Motor neuron (in vitro differentiated cells): ENCODE measurements at regions of chr6 and their contacts with region 1.

Region 1: DNA sequence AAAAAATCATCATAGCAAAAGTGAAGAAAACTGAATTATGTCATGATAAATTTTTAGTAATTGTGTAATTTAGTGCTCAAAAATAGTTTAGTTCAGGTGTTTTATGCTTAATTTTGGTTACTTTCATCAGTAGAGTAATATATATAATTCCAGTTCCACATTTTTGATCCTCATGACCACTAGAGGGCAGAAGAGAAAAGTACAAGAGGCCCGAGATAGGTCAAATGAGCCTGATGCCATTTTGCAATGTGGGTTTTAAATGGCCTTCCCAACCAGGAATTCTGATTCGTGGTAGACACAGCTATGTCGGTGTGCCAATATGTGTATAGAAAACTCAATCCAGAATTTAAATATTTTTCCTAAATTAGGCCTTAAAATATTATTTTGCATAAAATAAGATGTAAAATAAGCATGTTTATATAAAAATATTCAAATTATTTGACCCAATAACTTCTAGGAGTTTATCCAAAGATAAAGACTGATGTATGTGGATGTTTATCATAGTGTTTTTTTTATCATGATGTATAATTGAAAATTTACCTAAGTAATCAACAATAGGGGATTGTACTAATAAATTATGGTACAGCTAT is 159.7 kb upstream of the RPS6KA2 start:
- ATAC-seq: peak in 7 of 8 experiments; percentile 37 to 70 (median 55)
- H3K4me3 ChIP-seq: no peak overlapping the region
- H3K27ac ChIP-seq: no peak overlapping the region
- H3K4me1 ChIP-seq: no peaks in the 10 kb centered on the region

Region 2: GRCh38 chr6:166999145-166999883 is 212.5 kb after region 1 on chr6 and contains the start of gene CEP43:
- in situ Hi-C with region 1: loop called in 3 of 9 experiments (anchors 10 to 25 kb)
- ATAC-seq: peak; percentile 87 to 97 (median 96)
- H3K4me3 ChIP-seq: peak within 1 kb of the TSS; percentile 69 to 92 (median 77)
- H3K27ac ChIP-seq: peak within 1 kb of the TSS; percentile 76 to 95
- H3K4me1 ChIP-seq: peaks cover 11 to 16% of the 10 kb centered on the region in 2 donors
- total RNA-seq, gene CEP43: 9.3 to 28.4 (median 21.1) TPM

Region 3: GRCh38 chr6:167501781-167502385 is 715.1 kb after region 1 on chr6:
- in situ Hi-C with region 1: no loop called
- ATAC-seq: peak in 6 of 8 experiments; percentile 38 to 91 (median 53)
- H3K4me3 ChIP-seq: no peak overlapping the region
- H3K27ac ChIP-seq: no peak overlapping the region
- H3K4me1 ChIP-seq: peaks cover 10 to 21% of the 10 kb centered on the region in 2 donors